ENCODE measurements at regions of chr9 and their contacts with region 1.

Region 1: GRCh38 chr9:100714372-100715099 is 136.7 kb downstream of the CAVIN4 start:
- DNase-seq: no peak
- H3K4me3 ChIP-seq: no peak overlapping the region
- H3K27ac ChIP-seq: no peak overlapping the region
- H3K4me1 ChIP-seq: no peaks in the 10 kb centered on the region
- H3K27me3 ChIP-seq: peaks cover 0 to 8% (median 0%) of the 10 kb centered on the region in 4 donors
- CTCF ChIP-seq: peak; percentile 41 to 71 (median 65)
- EP300 ChIP-seq: no peak
- POLR2A ChIP-seq: no peak

Region 2: GRCh38 chr9:100623969-100624368 is 90.6 kb before region 1 on chr9:
- intact Hi-C with region 1: no loop called
- DNase-seq: no peak
- H3K4me3 ChIP-seq: no peak overlapping the region
- H3K27ac ChIP-seq: no peak overlapping the region
- H3K4me1 ChIP-seq: no peaks in the 10 kb centered on the region
- H3K27me3 ChIP-seq: no peaks in the 10 kb centered on the region
- CTCF ChIP-seq: no peak
- EP300 ChIP-seq: no peak
- POLR2A ChIP-seq: no peak

Region 3: DNA sequence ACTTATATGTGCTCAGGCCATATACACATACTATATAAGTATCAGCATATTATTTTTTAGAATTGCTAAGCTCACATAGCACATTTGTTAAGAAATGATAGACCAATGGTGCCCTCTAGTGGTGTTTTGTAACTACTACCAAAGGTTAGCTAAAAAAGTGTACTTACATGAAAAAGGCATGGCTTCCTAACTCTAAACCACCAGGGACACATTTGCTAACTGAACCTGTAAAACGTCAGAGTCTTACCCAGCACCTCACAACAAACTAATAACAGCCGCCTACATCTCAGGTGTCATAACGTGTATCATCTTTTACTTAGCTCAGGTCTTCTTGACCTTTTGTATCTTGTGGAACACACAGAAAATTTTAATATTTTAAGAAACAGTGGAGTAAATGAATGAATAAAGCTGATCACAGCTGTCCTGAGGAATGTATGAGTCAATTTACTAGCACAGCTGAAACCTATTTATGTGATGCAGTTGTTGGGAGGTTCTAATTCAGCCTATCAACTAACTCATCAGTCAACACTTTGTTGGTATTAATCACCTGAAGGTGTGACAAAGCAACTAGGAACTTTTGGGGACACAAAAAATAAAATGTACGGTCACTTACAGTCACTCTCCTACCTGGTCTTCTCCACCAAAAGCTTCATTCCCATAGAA is 597.4 kb after region 1 on chr9:
- intact Hi-C with region 1: loop called (anchors 5 kb)
- DNase-seq: no peak
- H3K4me3 ChIP-seq: no peak overlapping the region
- H3K27ac ChIP-seq: no peak overlapping the region
- H3K4me1 ChIP-seq: peaks cover 0 to 7% (median 0%) of the 10 kb centered on the region in 4 donors
- H3K27me3 ChIP-seq: no peaks in the 10 kb centered on the region
- CTCF ChIP-seq: peak; percentile 55 to 75 (median 72)
- EP300 ChIP-seq: no peak
- POLR2A ChIP-seq: no peak

Measured in esophagus muscularis mucosa (tissue), 4 donors.